Activated CD4-positive, alpha-beta memory T cell treated with anti-CD3 and anti-CD28 coated beads, Interleukin-2, amount 10 ng/mL, durations not matched to agents 7 days and 5 days (primary cell): ENCODE measurements at regions of chr6 and their contacts with region 1.

Region 1: GRCh38 chr6:37018198-37019064 is 13.0 kb downstream of the FGD2 start:
- DNase-seq: peak; percentile 95
- H3K4me3 Mint-ChIP-seq: peak overlapping the region; percentile 16
- H3K27ac Mint-ChIP-seq: peak overlapping the region; percentile 81
- H3K4me1 Mint-ChIP-seq: peaks cover 56% of the 10 kb centered on the region
- H3K27me3 Mint-ChIP-seq: no peaks in the 10 kb centered on the region

Region 2: GRCh38 chr6:36765594-36766398 is 252.6 kb before region 1 on chr6:
- CTCF ChIA-PET with region 1: interaction called, 99 read pairs
- POLR2A ChIA-PET with region 1: interaction called, 12 read pairs
- DNase-seq: peak; percentile 87
- H3K4me3 Mint-ChIP-seq: no peak overlapping the region
- H3K27ac Mint-ChIP-seq: no peak overlapping the region
- H3K4me1 Mint-ChIP-seq: peaks cover 39% of the 10 kb centered on the region
- H3K27me3 Mint-ChIP-seq: no peaks in the 10 kb centered on the region

Region 3: GRCh38 chr6:36885461-36886401 is 132.7 kb before region 1 on chr6 and contains the start of gene C6orf89:
- CTCF ChIA-PET with region 1: interaction called, 127 read pairs
- POLR2A ChIA-PET with region 1: interaction called, 37 read pairs
- DNase-seq: peak; percentile 98
- H3K4me3 Mint-ChIP-seq: peak within 1 kb of the TSS; percentile 89
- H3K27ac Mint-ChIP-seq: peak within 1 kb of the TSS; percentile 76
- H3K4me1 Mint-ChIP-seq: peaks cover 36% of the 10 kb centered on the region
- H3K27me3 Mint-ChIP-seq: no peaks in the 10 kb centered on the region
- total RNA-seq, gene C6orf89: 51.8 to 53.8 TPM

Region 4: DNA sequence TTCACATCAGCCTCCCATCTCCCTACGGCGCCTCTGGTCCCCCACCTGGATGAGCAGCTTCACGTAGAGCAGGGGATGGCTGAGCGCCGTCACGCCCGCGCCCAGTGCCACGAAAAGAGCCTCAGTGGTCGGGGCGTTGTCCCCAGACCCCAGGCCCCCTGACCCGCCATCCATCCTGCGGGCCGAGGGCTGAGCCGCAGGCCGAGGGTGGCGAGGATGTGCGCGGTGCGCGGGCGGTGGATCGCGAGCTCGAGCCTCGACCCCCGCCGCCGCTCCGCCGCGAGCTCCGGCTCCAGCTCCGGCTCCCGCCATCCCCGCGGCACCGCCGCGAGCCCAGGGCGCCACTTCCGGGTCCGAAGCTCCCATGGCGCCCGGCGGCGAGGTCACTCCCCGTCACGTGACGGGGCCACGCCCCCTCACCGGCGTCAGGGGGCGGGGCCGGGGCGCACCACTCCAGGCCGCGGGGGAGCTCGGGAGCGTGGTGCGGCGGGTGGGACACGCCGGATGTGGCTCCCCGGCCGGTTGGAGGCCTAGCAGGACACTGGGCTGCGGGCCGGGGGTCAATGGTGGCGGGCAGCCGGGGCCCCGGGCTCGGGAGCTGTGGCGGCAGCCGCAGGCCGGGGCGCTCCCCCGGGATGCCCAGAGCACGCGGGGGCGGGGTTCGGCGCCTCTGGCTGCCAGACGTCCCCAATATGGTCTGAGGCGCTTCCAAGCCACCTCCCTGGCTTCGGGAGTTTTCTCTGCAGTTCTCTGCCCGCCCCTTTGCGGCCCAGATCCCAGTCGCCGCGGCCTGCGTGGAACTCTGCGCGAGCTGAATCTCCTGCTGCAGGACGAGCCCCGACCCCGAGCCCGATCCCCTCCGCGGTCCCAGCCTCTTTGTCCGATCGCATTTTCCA is 32.4 kb before region 1 on chr6 and contains the start of gene MTCH1:
- CTCF ChIA-PET with region 1: interaction called, 22 read pairs
- POLR2A ChIA-PET with region 1: interaction called, 26 read pairs
- DNase-seq: peak; percentile 89
- H3K4me3 Mint-ChIP-seq: peak within 1 kb of the TSS; percentile 99
- H3K27ac Mint-ChIP-seq: peak within 1 kb of the TSS; percentile 92
- H3K4me1 Mint-ChIP-seq: peaks cover 21% of the 10 kb centered on the region
- H3K27me3 Mint-ChIP-seq: peaks cover 4% of the 10 kb centered on the region
- total RNA-seq, gene MTCH1: 131 TPM

Region 5: DNA sequence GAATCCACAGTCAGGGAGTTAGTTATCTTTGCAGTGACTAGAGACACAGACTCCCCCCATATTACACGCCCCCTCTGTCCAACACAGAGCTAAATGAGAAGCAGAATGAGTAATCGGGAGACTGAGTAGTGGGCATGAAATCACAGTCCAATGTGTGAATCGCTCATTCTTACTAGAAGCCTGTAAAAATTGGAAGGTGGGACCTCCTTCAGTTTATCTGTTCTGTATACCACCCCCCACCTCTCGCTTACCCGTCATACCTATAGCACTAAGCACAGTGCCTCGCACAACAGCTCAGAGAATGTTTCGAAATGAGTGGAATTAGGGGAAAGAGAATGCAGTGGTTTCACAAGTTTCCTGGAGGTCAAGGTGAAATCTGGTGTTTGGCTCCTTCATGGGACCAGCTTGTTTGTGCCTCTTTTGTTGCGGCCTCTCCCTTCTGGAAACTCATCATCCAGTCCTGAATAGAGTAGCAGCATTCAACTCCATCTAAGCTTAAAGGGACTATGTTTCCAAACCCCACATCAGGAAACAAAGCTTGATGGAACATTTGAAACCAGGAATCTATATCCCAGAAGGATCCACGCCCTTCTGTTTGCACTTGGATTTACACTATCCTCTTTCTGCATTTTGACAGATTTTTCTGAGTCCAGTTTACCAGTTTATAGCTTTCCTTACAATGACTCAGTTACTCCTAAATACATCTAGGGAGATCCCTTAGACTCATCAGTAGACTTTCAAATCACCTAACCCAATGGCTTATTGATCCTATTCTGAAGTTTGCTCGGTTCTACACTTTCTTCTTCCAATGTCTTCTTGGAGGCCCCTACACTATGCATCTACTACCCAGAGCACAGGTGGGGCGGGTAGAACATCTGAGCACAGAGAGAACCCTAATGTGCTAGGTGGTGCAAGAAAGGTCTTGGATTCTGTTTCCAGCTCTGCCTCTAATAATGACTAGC is 92.3 kb after region 1 on chr6:
- CTCF ChIA-PET with region 1: interaction called, 12 read pairs
- POLR2A ChIA-PET with region 1: no interaction called
- DNase-seq: peak; percentile 34
- H3K4me3 Mint-ChIP-seq: no peak overlapping the region
- H3K27ac Mint-ChIP-seq: peak overlapping the region; percentile 48
- H3K4me1 Mint-ChIP-seq: peaks cover 41% of the 10 kb centered on the region
- H3K27me3 Mint-ChIP-seq: peaks cover 3% of the 10 kb centered on the region

Region 6: DNA sequence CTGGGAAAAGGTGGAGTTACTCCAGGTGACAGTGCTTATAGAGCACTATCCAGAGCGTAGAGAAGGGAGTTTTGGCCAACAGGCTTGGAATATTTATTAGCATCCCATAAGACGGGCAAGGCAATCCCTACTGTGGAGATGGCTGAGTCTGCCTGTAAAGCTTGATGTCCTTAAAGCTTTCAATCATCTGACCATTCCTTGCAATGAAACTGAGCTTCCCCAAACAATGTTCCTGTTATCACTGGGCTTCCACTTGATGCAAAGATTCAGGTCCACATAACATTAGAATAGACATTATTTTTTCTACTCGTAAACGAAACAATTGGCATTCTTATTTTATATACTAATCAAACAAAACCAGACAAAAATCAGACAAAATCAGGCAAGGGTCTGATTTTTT is 103.1 kb after region 1 on chr6:
- CTCF ChIA-PET with region 1: no interaction called
- POLR2A ChIA-PET with region 1: no interaction called
- DNase-seq: no peak
- H3K4me3 Mint-ChIP-seq: no peak overlapping the region
- H3K27ac Mint-ChIP-seq: no peak overlapping the region
- H3K4me1 Mint-ChIP-seq: peaks cover 10% of the 10 kb centered on the region
- H3K27me3 Mint-ChIP-seq: no peaks in the 10 kb centered on the region

Region 7: DNA sequence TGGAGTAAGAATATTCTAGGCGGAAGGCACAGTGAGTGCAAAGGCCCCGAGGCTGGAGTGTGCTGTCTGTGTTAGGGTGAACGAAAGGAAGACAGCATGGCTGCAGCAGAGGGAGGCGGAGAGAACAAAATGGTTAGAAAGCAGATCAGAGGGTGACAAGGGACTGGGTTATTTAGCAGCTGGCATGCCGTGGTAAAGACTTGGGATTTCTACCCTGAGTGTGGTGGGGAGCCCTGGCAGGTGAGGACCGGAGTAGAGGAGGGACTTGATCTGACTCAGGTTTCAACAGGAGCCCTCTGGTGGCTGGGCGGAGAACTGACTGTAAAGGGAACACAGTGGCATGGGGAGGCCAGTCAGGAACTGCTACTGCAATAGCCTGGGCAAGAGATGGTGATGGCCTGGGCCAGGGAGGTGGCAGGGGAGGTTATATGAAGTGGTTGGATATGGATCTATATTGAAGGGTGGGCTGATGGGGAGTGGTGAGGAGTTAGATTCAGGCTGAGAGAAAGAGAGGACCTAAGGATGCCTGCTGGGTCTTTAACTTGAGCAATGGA is 189.5 kb after region 1 on chr6:
- CTCF ChIA-PET with region 1: interaction called, 786 read pairs
- POLR2A ChIA-PET with region 1: interaction called, 145 read pairs
- DNase-seq: peak; percentile 94
- H3K4me3 Mint-ChIP-seq: peak overlapping the region; percentile 17
- H3K27ac Mint-ChIP-seq: peak overlapping the region; percentile 78
- H3K4me1 Mint-ChIP-seq: peaks cover 67% of the 10 kb centered on the region
- H3K27me3 Mint-ChIP-seq: no peaks in the 10 kb centered on the region